ENCODE measurements at regions of chr12 and their contacts with region 1.

Region 1: DNA sequence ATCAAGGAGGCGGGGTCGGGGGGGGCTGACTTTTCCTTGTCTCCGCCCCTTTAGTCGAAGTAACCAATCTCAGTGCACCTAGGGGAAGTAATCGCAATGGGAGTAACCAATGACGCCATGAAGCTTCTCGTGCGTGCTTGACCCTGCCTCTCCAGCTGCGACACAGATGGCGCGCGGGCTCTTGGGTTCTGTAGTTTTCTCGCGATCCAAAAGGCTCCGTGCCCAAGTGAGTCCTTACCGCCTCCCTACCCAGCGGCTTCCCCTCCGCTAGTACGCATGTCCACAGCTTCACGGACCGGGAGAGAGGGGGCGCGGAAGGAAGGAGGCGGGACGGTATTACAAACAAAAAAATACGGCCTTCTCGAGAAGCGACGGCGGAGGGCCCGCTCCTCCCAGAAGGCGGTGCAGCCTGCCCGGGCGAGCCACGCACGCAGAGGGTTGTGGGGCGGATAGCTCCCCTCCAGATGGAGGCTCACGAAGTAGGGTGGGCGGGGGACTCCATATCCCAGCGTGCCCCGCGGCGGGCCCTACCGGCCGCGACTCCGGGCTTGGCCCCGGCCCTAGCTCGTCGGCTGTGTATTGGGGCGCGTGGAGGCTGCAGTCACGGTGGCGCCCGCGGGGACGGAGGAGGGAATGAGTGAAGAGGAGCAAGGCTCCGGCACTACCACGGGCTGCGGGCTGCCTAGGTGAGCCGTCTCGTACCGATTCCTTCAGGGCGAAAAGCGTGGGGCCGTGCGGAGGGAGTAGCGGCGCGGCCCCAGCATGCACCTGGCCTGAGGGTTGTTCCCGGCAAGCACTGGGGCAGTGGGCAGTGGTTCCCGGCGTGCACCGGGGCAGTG is at the start of gene TARBP2:
- DNase-seq: peak; percentile 92

Region 2: GRCh38 chr12:53327435-53328042 is 173.5 kb before region 1 on chr12:
- CTCF ChIA-PET with region 1: no interaction called
- POLR2A ChIA-PET with region 1: interaction called, 81 read pairs
- DNase-seq: no peak

Region 3: GRCh38 chr12:53344824-53345485 is 156.0 kb before region 1 on chr12:
- CTCF ChIA-PET with region 1: no interaction called
- POLR2A ChIA-PET with region 1: interaction called, 20 read pairs
- DNase-seq: peak; percentile 60

Region 4: DNA sequence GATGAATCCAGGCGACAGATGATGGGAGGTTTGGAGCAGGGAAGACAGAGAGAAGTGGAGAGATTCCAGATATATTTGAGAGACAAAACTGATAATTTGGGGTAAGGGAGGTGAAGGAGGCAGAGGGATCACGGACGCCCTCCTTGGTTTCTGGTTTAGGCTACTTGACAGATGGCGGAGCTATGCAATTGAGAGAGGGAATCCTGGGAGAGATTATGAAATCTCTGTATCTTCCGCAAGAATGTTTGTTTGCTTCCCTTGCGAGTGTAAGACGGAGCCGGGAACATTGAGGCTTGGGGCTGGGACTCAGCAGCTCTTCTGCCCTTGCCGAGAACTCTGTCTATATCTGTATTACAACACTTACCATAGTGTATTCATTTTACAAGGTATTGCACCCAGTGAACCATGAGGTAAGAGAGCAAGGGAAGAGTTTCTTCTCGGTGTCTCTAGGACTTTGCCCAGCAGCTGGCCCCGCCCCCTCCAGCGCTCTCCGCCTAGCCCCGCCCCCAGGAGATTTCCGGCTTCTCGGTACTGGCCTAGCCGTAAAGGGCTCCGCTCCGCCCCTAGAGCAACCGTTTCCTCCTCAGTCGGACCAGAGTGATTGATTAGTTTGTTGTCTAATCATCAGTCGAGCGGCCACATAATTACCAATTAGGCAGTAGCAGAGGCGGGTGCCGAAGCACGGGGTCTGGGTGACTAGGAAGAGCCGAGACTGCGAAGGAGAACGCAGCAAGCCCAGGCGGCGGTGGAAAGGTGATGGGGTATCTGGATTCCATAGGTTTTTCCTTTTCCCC is 59.8 kb before region 1 on chr12 and contains the start of gene PRR13:
- CTCF ChIA-PET with region 1: no interaction called
- POLR2A ChIA-PET with region 1: interaction called, 14 read pairs
- DNase-seq: peak; percentile 97

Region 5: DNA sequence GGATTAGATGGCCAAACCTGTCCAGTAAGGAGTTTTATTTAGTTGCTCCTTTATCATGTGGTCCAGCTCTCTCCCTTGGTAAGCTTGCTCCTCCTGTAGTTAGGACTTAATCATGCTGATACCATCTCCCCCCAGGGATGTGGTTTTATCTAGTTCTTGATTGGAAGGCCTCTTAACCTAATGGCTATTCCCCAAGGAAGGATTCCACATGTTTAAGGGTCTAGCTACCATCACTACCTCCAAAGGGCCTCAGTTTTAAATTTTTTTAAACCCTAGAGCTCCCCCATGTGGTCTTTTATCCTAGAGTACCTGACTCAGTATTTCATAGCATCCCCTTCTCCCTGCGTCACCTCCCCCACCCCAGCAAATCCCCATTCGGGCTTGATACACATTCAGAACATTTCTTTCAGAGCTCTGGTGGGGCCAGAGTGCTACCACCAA is 24.2 kb before region 1 on chr12:
- CTCF ChIA-PET with region 1: interaction called, 5 read pairs
- POLR2A ChIA-PET with region 1: interaction called, 18 read pairs
- DNase-seq: peak; percentile 34

Region 6: GRCh38 chr12:53481957-53482586 is 18.9 kb before region 1 on chr12:
- CTCF ChIA-PET with region 1: interaction called, 5 read pairs
- POLR2A ChIA-PET with region 1: interaction called, 18 read pairs
- DNase-seq: peak; percentile 39

Measured in HEK293T (cell line).